ENCODE measurements at regions of chr21 and their contacts with region 1.

Region 1: GRCh38 chr21:39125752-39126485 is 57.3 kb downstream of the PSMG1 start:
- DNase-seq: peak; percentile 44 to 69
- H3K4me3 ChIP-seq: no peak overlapping the region
- H3K27ac ChIP-seq: no peak overlapping the region
- H3K4me1 ChIP-seq: peaks cover 0 to 4% (median 2%) of the 10 kb centered on the region in 4 experiments; a peak in 5 of 7 replicates
- H3K27me3 ChIP-seq: no peaks in the 10 kb centered on the region
- CTCF ChIP-seq: peak; percentile 36 to 73 (median 67)
- EP300 ChIP-seq: peak in 1 of 2 experiments; percentile 18; a peak in 1 of 3 replicates
- POLR2A ChIP-seq: no peak
- RAD21 ChIP-seq: peak; percentile 82 to 84

Region 2: DNA sequence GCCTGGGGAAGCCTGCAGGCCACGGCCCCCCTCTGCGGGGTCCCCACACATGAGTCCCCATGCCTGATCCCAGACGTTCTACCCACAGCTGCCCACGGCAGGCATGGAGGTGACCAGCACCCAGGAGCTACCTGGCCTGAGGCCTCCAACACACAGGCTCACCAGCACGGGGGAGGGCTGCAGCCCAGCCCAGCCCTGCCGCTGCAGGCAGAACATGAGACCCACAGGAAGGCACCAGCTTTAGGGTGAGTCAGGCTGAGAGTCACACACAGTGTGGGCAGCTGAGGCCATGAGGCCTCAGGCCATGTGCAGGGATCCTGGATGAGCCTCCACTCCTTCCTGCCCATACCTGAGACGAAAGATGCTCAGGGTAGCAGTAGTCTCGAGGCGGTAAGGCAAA is 63.7 kb before region 1 on chr21:
- CTCF ChIA-PET with region 1: no interaction called
- POLR2A ChIA-PET with region 1: no interaction called
- DNase-seq: no peak
- H3K4me3 ChIP-seq: no peak overlapping the region
- H3K27ac ChIP-seq: no peak overlapping the region
- H3K4me1 ChIP-seq: no peaks in the 10 kb centered on the region
- H3K27me3 ChIP-seq: no peaks in the 10 kb centered on the region
- CTCF ChIP-seq: no peak
- EP300 ChIP-seq: no peak
- POLR2A ChIP-seq: no peak
- RAD21 ChIP-seq: no peak

Region 3: DNA sequence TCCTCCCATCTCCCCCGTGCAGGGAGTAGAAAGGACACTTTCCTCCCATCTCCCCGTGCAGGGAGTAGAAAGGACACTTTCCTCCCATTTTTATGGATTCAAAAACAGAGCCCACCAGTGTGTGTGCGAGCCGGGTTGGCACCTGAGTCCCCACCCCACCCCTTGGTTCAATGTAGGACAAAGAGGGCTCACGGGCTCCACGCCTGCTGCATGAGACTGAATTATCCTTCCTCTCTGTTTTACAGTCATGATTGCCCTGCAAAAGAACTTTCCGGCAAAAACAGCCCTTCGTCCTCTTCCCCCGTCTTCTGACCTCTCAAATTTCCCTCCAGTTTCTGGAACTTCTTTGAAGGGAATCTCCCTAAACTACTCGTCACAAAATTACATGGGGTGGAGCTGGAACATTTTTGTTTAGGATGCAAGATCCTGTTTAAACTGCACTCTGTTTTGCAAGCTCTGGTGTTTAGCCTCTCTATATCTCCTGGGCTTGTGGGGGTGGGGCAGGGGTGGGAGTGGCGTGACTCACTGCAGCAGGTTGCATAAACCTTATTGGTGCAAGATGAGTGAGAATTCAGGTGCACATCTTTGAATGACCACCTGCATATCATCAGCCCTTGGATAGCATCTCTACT is 42.4 kb before region 1 on chr21:
- CTCF ChIA-PET with region 1: interaction called, 18 read pairs
- POLR2A ChIA-PET with region 1: no interaction called
- DNase-seq: no peak
- H3K4me3 ChIP-seq: no peak overlapping the region
- H3K27ac ChIP-seq: no peak overlapping the region
- H3K4me1 ChIP-seq: peaks cover 0 to 6% (median 4%) of the 10 kb centered on the region in 4 experiments; a peak in 6 of 7 replicates
- H3K27me3 ChIP-seq: no peaks in the 10 kb centered on the region; a peak in 2 of 7 replicates
- CTCF ChIP-seq: no peak
- EP300 ChIP-seq: no peak
- POLR2A ChIP-seq: no peak
- RAD21 ChIP-seq: no peak

Region 4: DNA sequence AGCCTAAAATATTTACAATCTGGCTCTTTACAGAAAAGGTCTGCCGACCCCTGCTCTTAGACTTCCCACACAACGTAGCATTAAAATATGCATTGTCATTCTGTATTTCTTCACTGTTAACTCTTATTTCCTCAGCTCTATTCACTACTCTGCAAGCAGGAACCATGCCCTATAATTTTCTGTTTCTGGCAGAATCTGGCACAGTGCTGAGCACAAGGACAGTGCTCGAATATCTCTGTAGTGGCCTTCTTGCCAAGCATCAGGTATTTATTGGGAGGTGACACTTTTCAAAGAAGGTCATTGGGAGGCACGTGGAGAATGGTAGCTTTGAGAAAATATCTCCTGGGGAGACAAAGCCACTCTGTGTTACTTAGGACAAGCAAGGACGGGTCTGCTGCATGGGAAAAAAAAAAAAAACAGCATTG is 20.6 kb before region 1 on chr21:
- CTCF ChIA-PET with region 1: interaction called, 15 read pairs
- POLR2A ChIA-PET with region 1: interaction called, 5 read pairs
- DNase-seq: no peak
- H3K4me3 ChIP-seq: no peak overlapping the region
- H3K27ac ChIP-seq: no peak overlapping the region
- H3K4me1 ChIP-seq: 0 out of 7 replicates have a peak, but pooled peaks cover 0 to 2% (median 0%) of the 10 kb centered on the region in 4 experiments
- H3K27me3 ChIP-seq: 0 out of 7 replicates have a peak, but pooled peaks cover 0 to 3% (median 0%) of the 10 kb centered on the region in 4 experiments
- CTCF ChIP-seq: no peak
- EP300 ChIP-seq: no peak
- POLR2A ChIP-seq: no peak
- RAD21 ChIP-seq: no peak

Region 5: GRCh38 chr21:39144191-39144590 is 18.3 kb after region 1 on chr21:
- CTCF ChIA-PET with region 1: no interaction called
- POLR2A ChIA-PET with region 1: no interaction called
- DNase-seq: no peak
- H3K4me3 ChIP-seq: no peak overlapping the region
- H3K27ac ChIP-seq: no peak overlapping the region
- H3K4me1 ChIP-seq: no peaks in the 10 kb centered on the region
- H3K27me3 ChIP-seq: no peaks in the 10 kb centered on the region
- CTCF ChIP-seq: no peak
- EP300 ChIP-seq: no peak
- POLR2A ChIP-seq: no peak
- RAD21 ChIP-seq: no peak

Region 6: DNA sequence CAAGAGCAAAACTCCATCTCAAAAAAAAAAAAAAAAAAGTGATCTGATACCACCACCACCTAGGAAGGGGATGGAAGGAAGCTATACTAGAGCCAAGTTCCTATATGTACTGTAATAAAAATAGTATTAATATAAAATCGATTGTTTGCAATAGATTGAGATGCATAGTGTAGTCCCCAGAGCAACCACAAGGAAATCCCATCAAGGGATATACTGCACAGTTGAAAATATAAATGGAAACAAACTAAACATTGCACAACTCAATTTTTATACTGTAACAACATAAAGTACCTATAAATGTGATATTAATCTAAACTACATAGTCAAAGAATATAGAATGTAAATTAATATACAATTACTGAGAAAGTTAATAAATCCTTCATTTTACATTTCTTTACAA is 78.2 kb after region 1 on chr21:
- CTCF ChIA-PET with region 1: no interaction called
- POLR2A ChIA-PET with region 1: no interaction called
- DNase-seq: no peak
- H3K4me3 ChIP-seq: no peak overlapping the region
- H3K27ac ChIP-seq: no peak overlapping the region
- H3K4me1 ChIP-seq: no peaks in the 10 kb centered on the region
- H3K27me3 ChIP-seq: no peaks in the 10 kb centered on the region
- CTCF ChIP-seq: no peak
- EP300 ChIP-seq: no peak
- POLR2A ChIP-seq: no peak
- RAD21 ChIP-seq: no peak

Measured in H1 (cell line).